Activated CD4-positive, alpha-beta memory T cell treated with anti-CD3 and anti-CD28 coated beads, Interleukin-2, amount 10 ng/mL, durations not matched to agents 7 days and 5 days (primary cell): ENCODE measurements at regions of chr6 and their contacts with region 1.

Region 1: DNA sequence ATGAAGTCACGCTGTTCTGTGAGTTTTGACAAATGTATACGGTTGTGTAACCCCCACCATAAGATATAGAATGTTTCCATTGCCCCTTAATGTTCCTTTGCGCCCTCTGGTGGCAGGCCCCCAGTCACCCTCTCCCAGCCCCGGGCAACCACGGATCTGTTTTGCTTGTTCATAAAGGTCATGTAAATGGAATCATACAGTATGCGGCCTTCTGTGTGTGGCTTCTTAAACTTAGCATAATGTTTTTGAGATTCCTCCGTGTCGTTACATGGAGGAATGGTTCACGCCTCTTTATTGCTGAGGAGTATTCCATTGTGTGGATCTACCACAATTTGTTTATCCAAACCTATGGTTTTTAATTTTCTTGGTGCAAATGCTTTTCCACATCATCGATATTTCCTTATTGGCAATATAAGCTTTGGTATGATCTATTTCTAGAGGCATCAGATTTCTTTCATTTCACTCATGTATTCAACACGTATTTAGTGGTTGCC is 28.4 kb downstream of the LYRM2 start:
- DNase-seq: peak; percentile 78
- H3K4me3 Mint-ChIP-seq: no peak overlapping the region
- H3K27ac Mint-ChIP-seq: no peak overlapping the region
- H3K4me1 Mint-ChIP-seq: peaks cover 18% of the 10 kb centered on the region
- H3K27me3 Mint-ChIP-seq: no peaks in the 10 kb centered on the region

Region 2: GRCh38 chr6:89562118-89562973 is 47.9 kb before region 1 on chr6:
- CTCF ChIA-PET with region 1: no interaction called
- POLR2A ChIA-PET with region 1: no interaction called
- DNase-seq: no peak
- H3K4me3 Mint-ChIP-seq: no peak overlapping the region
- H3K27ac Mint-ChIP-seq: no peak overlapping the region
- H3K4me1 Mint-ChIP-seq: no peaks in the 10 kb centered on the region
- H3K27me3 Mint-ChIP-seq: peaks cover 3% of the 10 kb centered on the region

Region 3: GRCh38 chr6:89597988-89598692 is 12.1 kb before region 1 on chr6:
- CTCF ChIA-PET with region 1: interaction called, 15 read pairs
- POLR2A ChIA-PET with region 1: no interaction called
- DNase-seq: no peak
- H3K4me3 Mint-ChIP-seq: no peak overlapping the region
- H3K27ac Mint-ChIP-seq: peak overlapping the region; percentile 65
- H3K4me1 Mint-ChIP-seq: peaks cover 41% of the 10 kb centered on the region
- H3K27me3 Mint-ChIP-seq: no peaks in the 10 kb centered on the region

Region 4: DNA sequence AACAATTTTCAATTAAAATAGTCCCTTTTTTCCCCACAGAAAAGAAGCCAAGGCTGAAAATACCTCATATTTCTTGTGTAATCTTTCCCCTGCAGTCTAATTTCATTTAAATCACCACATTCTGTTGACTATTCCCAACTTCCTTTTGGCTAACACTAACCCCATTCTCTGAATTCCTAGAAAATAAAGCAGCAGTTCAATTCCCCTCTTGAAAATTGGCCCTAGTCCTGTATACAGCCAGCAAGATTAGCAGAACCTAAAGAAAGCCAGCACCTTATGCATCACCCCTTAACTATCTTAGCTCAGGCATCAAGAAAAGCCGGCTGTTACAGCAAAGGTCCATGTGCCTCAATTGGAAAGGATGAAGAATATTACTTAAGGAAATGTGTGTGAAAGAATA is 139.7 kb after region 1 on chr6:
- CTCF ChIA-PET with region 1: no interaction called
- POLR2A ChIA-PET with region 1: no interaction called
- DNase-seq: no peak
- H3K4me3 Mint-ChIP-seq: no peak overlapping the region
- H3K27ac Mint-ChIP-seq: no peak overlapping the region
- H3K4me1 Mint-ChIP-seq: no peaks in the 10 kb centered on the region
- H3K27me3 Mint-ChIP-seq: no peaks in the 10 kb centered on the region

Region 5: GRCh38 chr6:89940225-89941027 is 330.2 kb after region 1 on chr6:
- CTCF ChIA-PET with region 1: no interaction called
- POLR2A ChIA-PET with region 1: no interaction called
- DNase-seq: peak; percentile 80
- H3K4me3 Mint-ChIP-seq: no peak overlapping the region
- H3K27ac Mint-ChIP-seq: no peak overlapping the region
- H3K4me1 Mint-ChIP-seq: peaks cover 22% of the 10 kb centered on the region
- H3K27me3 Mint-ChIP-seq: no peaks in the 10 kb centered on the region